Activated naive CD4-positive, alpha-beta T cell treated with anti-CD3 and anti-CD28 coated beads for 36 hours (primary cell): ENCODE measurements at regions of chr19 and their contacts with region 1.

Region 1: GRCh38 chr19:52007806-52008557 is at the start of gene ZNF615:
- DNase-seq: peak; percentile 91
- H3K4me3 Mint-ChIP-seq: peak within 1 kb of the TSS; percentile 88
- H3K27ac Mint-ChIP-seq: peak within 1 kb of the TSS; percentile 97
- H3K4me1 Mint-ChIP-seq: peaks cover 12% of the 10 kb centered on the region
- H3K27me3 Mint-ChIP-seq: no peaks in the 10 kb centered on the region
- total RNA-seq, gene ZNF615: 6.8 to 7.9 TPM

Region 2: GRCh38 chr19:51933116-51933515 is 74.9 kb before region 1 on chr19:
- CTCF ChIA-PET with region 1: no interaction called
- intact Hi-C with region 1: no loop called
- DNase-seq: no peak
- H3K4me3 Mint-ChIP-seq: no peak overlapping the region
- H3K27ac Mint-ChIP-seq: no peak overlapping the region
- H3K4me1 Mint-ChIP-seq: peaks cover 7% of the 10 kb centered on the region
- H3K27me3 Mint-ChIP-seq: no peaks in the 10 kb centered on the region

Region 3: GRCh38 chr19:52028027-52028779 is 20.2 kb after region 1 on chr19 and contains the start of gene ZNF614:
- CTCF ChIA-PET with region 1: no interaction called
- intact Hi-C with region 1: loop called (anchors 1 kb)
- DNase-seq: peak; percentile 90
- H3K4me3 Mint-ChIP-seq: peak within 1 kb of the TSS; percentile 82
- H3K27ac Mint-ChIP-seq: peak within 1 kb of the TSS; percentile 91
- H3K4me1 Mint-ChIP-seq: peaks cover 26% of the 10 kb centered on the region
- H3K27me3 Mint-ChIP-seq: no peaks in the 10 kb centered on the region
- total RNA-seq, gene ZNF614: 7.5 to 8.2 TPM